BJ (cell line): ENCODE measurements at regions of chr5 and their contacts with region 1.

Region 1: GRCh38 chr5:163473635-163474243 is 13.3 kb downstream of the HMMR start:
- DNase-seq: no peak
- H3K4me3 ChIP-seq: no peak overlapping the region
- H3K27me3 ChIP-seq: no peaks in the 10 kb centered on the region
- CTCF ChIP-seq: peak; percentile 42; the same call in 1 of the 2 replicates

Region 2: DNA sequence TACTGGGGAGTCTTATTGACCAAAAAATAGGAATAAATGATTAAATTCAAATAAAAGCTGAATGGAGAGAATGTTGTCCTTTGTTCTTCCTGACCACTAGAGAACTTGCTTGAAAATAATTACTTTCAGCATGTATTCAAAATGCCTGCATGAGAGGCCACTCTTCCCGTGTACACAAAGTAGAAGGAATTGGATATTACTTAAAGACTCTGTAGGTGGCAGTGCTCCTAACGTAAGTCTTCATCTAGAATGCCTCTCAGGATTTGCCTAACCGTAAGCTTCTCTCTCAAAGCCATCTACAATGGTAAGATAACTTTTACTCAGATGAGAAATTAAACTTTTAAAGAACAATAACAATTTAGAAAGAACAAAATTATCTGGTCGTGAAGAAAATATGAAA is 656.4 kb before region 1 on chr5:
- CTCF ChIA-PET with region 1: no interaction called
- POLR2A ChIA-PET with region 1: no interaction called
- DNase-seq: no peak
- H3K4me3 ChIP-seq: no peak overlapping the region
- H3K27me3 ChIP-seq: no peaks in the 10 kb centered on the region
- CTCF ChIP-seq: no peak

Region 3: GRCh38 chr5:163459922-163460766 is 13.6 kb before region 1 on chr5 and contains the starts of genes HMMR and NUDCD2:
- CTCF ChIA-PET with region 1: interaction called, 11 read pairs
- POLR2A ChIA-PET with region 1: interaction called, 13 read pairs
- DNase-seq: peak; percentile 96
- H3K4me3 ChIP-seq: peak within 1 kb of the TSS; percentile 62
- H3K27me3 ChIP-seq: no peaks in the 10 kb centered on the region
- CTCF ChIP-seq: no peak
- polyA plus RNA-seq, gene HMMR: 5.4 and 12.0 TPM in 2 replicates
- polyA plus RNA-seq, gene NUDCD2: 2.5 and 6.2 TPM in 2 replicates

Region 4: GRCh38 chr5:163489055-163489744 is 15.5 kb after region 1 on chr5:
- CTCF ChIA-PET with region 1: interaction called, 12 read pairs
- POLR2A ChIA-PET with region 1: no interaction called
- DNase-seq: no peak
- H3K4me3 ChIP-seq: no peak overlapping the region
- H3K27me3 ChIP-seq: no peaks in the 10 kb centered on the region
- CTCF ChIP-seq: peak; percentile 49